ENCODE measurements at regions of chr1 and their contacts with region 1.

Region 1: GRCh38 chr1:109532365-109533136 is 7.1 kb upstream of the GPR61 start:
- DNase-seq: peak; percentile 74
- H3K27ac ChIP-seq: peak overlapping the region; percentile 26; the same call in 1 of the 2 replicates
- CTCF ChIP-seq: peak; percentile 90

Region 2: GRCh38 chr1:109493805-109494539 is 38.6 kb before region 1 on chr1 and contains the start of gene CYB561D1:
- CTCF ChIA-PET with region 1: interaction called, 180 read pairs
- POLR2A ChIA-PET with region 1: no interaction called
- DNase-seq: peak; percentile 85
- H3K27ac ChIP-seq: peak within 1 kb of the TSS; percentile 83
- CTCF ChIP-seq: peak; percentile 96

Region 3: GRCh38 chr1:109499661-109500536 is 32.7 kb before region 1 on chr1:
- CTCF ChIA-PET with region 1: interaction called, 180 read pairs
- POLR2A ChIA-PET with region 1: no interaction called
- DNase-seq: no peak
- H3K27ac ChIP-seq: peak overlapping the region; percentile 19; the same call in 1 of the 2 replicates
- CTCF ChIP-seq: peak; percentile 29

Region 4: GRCh38 chr1:109509176-109510134 is 23.1 kb before region 1 on chr1 and contains the start of gene AMIGO1:
- CTCF ChIA-PET with region 1: interaction called, 41 read pairs
- POLR2A ChIA-PET with region 1: no interaction called
- DNase-seq: peak; percentile 67
- H3K27ac ChIP-seq: peak within 1 kb of the TSS; percentile 30; the same call in 1 of the 2 replicates
- CTCF ChIP-seq: no peak

Region 5: DNA sequence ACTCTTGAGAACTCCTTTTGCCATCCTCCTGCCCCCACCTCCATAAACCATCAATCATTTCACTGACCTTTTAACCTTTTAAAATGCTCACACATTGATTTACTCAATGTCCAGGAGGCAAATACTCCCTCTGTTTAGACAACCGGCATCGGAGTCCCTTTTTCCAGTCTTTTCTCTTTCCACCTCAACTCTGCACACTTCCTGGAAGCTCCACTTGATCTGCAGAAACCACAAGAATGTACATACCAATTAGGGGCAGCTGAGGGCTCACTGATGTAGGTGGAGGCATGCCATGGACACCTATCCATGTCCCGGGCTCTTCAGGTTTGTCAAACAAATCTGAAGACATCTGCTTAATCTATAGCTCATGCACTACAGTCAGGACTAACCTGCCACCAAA is 17.7 kb before region 1 on chr1:
- CTCF ChIA-PET with region 1: interaction called, 41 read pairs
- POLR2A ChIA-PET with region 1: no interaction called
- DNase-seq: no peak
- H3K27ac ChIP-seq: no peak overlapping the region
- CTCF ChIP-seq: no peak

Region 6: GRCh38 chr1:109548321-109549267 is 16.0 kb after region 1 on chr1 and contains the start of gene GNAI3:
- CTCF ChIA-PET with region 1: interaction called, 19 read pairs
- POLR2A ChIA-PET with region 1: interaction called, 3 read pairs
- DNase-seq: peak; percentile 96
- H3K27ac ChIP-seq: peak within 1 kb of the TSS; percentile 84
- CTCF ChIP-seq: no peak